ENCODE measurements at regions of chr17 and their contacts with region 1.

Region 1: GRCh38 chr17:63911657-63912426 is 784 bp upstream of the CSHL1 start:
- DNase-seq: no peak
- H3K4me3 ChIP-seq: no peak overlapping the region
- CTCF ChIP-seq: peak; percentile 79

Region 2: GRCh38 chr17:63675607-63676413 is 236.0 kb before region 1 on chr17:
- CTCF ChIA-PET with region 1: no interaction called
- POLR2A ChIA-PET with region 1: no interaction called
- DNase-seq: peak; percentile 21
- H3K4me3 ChIP-seq: no peak overlapping the region
- CTCF ChIP-seq: no peak

Region 3: GRCh38 chr17:63827002-63827771 is 84.7 kb before region 1 on chr17 and contains the starts of genes FTSJ3 and PSMC5:
- CTCF ChIA-PET with region 1: no interaction called
- POLR2A ChIA-PET with region 1: no interaction called
- DNase-seq: no peak
- H3K4me3 ChIP-seq: peak within 1 kb of the TSS; percentile 84
- CTCF ChIP-seq: peak; percentile 75

Region 4: DNA sequence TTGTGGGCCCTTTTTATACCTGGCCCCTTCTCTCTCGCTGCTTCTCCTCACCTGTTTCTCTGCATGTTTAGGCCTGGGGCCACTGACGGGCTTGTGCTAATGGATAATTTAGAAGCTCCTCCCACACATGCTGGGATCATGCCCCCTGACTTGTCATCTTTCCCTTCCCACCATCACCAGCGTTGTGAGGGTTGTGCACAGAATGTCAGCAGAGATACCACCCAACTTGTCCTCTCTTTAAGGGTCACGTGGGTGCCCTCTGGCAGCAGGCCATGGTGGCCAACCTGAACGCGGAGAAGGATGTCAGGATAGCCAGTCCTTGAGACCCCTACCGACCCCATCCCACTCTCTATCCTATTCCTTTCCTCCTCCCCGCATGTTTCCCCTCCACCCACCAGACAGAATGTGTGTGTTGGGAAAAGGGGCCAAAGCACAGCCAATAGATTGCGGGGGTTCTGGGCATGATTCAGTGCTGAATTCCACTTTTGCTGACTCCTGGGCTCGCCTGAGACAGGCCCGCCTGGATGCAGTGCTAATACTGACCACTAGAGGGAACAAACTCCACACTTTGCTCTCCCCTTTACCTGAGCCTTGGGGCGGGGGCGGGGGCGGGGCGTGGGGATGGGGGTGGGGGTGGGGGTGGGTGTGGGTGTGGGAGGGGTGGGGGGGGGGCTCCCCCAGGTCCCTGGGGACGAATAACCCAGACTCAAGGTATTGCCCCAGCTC is 29.8 kb before region 1 on chr17 and contains the start of gene GH2:
- CTCF ChIA-PET with region 1: interaction called, 10 read pairs
- POLR2A ChIA-PET with region 1: no interaction called
- DNase-seq: no peak
- H3K4me3 ChIP-seq: no peak within 1 kb of the TSS
- CTCF ChIP-seq: peak; percentile 58

Region 5: GRCh38 chr17:63931099-63931561 is 19.3 kb after region 1 on chr17:
- CTCF ChIA-PET with region 1: interaction called, 14 read pairs
- POLR2A ChIA-PET with region 1: no interaction called
- DNase-seq: no peak
- H3K4me3 ChIP-seq: no peak overlapping the region
- CTCF ChIP-seq: no peak

Region 6: DNA sequence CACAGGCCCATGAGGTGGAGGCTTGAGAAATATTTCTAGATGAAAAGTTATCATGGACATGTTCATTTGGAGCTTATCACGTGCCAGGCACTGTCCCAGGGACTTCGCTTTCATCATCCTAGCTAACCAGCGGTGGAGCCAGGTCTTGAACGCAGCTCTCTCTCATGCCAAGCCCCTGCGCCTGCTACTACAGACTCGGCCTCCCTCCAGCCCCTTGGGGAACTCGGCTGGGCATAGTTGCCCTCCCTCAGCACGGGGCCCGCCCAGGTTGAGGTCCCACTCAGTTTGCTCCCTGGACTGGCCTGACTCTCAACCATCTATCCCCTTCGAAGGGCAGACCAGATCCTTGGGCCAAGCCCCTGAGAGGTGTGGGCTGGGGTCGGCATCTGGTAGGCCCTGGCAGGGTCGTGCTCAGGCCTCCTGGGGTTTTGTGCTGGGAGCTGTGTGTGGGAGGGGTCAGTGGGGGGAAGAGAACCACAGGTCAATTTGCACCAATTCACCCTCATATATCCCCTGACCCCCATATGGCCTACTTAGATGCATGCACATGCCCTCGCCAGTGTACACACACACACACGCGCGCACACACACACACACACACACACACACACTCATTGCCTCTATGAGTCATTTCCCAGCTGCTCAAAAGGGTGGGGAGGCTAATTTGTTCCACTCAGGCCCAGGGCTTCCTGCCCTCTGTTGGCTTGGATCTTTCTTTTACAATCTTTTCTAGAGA is 73.0 kb after region 1 on chr17:
- CTCF ChIA-PET with region 1: interaction called, 18 read pairs
- POLR2A ChIA-PET with region 1: no interaction called
- DNase-seq: peak; percentile 77
- H3K4me3 ChIP-seq: no peak overlapping the region
- CTCF ChIP-seq: no peak

Region 7: DNA sequence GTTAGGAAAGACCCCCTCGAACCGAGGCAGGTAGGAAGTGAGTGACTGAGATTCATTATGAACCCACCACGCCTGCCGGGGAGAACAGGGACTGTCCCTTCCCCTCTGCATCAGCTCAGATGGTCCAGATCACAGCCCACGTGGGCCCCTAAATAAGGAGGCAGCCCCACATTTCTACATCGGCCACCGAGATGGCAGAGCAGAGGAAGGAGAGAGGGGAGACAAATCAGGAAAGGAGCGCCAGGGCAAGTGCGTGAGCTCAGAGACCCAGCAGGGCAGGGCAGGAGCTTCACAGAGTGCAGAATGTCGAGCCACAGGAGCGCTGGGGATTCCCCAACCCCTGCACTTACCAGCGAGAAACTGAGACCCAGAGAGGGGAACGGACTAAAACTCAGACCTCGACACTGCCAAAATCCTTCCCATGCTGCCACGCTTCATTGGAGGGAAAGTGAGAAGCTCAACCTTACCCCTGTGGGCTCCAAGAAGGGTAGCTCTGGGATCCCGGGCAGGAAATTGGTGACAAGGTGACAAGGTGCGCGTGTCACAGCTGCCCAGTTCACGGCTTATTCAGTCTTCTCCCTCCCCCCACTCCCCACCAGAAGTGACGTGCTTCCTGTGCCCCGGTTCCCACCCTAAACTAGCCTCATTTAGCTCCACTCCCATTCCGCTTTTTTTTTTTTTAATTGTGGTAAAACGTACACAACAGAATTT is 108.4 kb after region 1 on chr17 and contains the start of gene ICAM2:
- CTCF ChIA-PET with region 1: interaction called, 79 read pairs
- POLR2A ChIA-PET with region 1: no interaction called
- DNase-seq: no peak
- H3K4me3 ChIP-seq: peak within 1 kb of the TSS; percentile 20; the same call in 1 of the 2 replicates
- CTCF ChIP-seq: no peak